ENCODE measurements at regions of chr11 and their contacts with region 1.

Region 1: DNA sequence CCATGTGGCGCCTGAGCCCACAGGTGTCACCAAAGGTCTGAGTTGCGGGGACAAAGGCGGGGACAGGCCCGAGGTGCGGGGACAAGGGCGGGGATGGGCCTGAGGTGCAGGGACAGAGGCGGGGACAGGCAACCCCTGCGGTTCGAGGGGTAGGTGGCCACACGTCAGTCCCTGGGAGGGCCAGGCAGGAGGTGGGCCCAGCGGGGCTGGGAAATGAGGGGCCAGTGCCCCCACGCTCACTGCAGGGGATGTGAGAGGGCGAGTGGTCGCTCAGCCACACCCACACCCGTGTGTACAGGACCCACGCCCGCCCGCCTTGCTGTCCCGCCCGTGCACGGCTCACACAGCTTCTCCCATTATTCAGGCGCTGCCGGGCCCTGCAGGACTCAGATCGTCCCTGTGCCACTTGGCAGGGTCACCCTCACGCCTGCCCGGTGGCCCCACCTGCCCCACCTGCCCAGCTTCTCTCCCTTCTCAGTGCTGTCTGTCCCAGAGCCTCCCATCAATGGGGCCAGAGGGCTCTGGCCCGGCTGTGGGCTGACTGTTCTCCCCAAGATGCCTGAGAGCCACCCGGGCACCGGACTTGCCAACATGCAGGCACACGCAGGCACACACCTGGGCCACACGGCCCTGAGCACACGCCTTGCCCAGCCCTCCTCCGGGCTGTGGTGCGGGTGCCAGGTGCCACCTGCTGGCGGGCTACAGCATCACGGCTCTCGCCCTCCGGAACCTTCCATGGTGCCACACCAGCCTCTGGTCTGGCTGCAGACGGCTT is 14.2 kb upstream of the MUC6 start:
- DNase-seq: peak; percentile 63
- H3K4me3 Mint-ChIP-seq: no peak overlapping the region
- H3K27ac Mint-ChIP-seq: no peak overlapping the region
- H3K4me1 Mint-ChIP-seq: no peaks in the 10 kb centered on the region
- H3K27me3 Mint-ChIP-seq: peaks cover 6% of the 10 kb centered on the region

Region 2: DNA sequence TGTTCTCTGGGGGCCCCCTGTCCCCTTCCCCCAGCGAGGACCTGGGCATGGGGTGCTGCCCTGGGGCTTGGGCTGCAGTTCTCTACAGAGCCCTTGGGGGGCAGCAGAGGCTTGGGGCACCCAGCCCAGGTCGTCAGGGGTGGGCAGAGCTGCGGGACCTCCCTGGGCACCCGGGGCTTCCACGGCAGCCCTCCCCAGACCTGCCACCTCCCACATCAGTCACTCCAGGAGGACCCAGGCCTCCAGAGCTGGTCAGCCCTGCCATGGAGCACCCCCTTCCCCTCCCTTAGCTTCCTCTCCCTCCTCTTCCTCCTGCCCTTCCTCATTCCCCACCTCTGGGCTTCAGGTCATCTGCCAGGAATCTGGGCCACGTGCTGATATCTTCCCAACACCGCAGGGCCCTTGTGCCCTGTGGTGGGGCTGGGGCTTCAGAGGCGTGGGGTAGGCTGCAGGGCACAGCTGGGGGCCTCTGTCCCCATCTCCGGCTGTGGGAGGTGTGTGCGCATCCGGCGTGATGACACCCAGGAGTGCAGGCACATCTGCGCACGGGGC is 202.3 kb before region 1 on chr11:
- intact Hi-C with region 1: loop called (anchors 1 kb)
- DNase-seq: peak; percentile 50
- H3K4me3 Mint-ChIP-seq: peak overlapping the region; percentile 57
- H3K27ac Mint-ChIP-seq: no peak overlapping the region
- H3K4me1 Mint-ChIP-seq: peaks cover 2% of the 10 kb centered on the region
- H3K27me3 Mint-ChIP-seq: peaks cover 1% of the 10 kb centered on the region

Region 3: GRCh38 chr11:925496-926321 is 125.1 kb before region 1 on chr11 and contains the start of gene AP2A2:
- intact Hi-C with region 1: loop called (anchors 5 kb)
- DNase-seq: peak; percentile 87
- H3K4me3 Mint-ChIP-seq: peak within 1 kb of the TSS; percentile 84
- H3K27ac Mint-ChIP-seq: peak within 1 kb of the TSS; percentile 50
- H3K4me1 Mint-ChIP-seq: peaks cover 22% of the 10 kb centered on the region
- H3K27me3 Mint-ChIP-seq: no peaks in the 10 kb centered on the region
- total RNA-seq, gene AP2A2: 61.3 and 63.2 TPM in 2 replicates